HepG2 (cell line): ENCODE measurements at regions of chr14 and their contacts with region 1.

Region 1: DNA sequence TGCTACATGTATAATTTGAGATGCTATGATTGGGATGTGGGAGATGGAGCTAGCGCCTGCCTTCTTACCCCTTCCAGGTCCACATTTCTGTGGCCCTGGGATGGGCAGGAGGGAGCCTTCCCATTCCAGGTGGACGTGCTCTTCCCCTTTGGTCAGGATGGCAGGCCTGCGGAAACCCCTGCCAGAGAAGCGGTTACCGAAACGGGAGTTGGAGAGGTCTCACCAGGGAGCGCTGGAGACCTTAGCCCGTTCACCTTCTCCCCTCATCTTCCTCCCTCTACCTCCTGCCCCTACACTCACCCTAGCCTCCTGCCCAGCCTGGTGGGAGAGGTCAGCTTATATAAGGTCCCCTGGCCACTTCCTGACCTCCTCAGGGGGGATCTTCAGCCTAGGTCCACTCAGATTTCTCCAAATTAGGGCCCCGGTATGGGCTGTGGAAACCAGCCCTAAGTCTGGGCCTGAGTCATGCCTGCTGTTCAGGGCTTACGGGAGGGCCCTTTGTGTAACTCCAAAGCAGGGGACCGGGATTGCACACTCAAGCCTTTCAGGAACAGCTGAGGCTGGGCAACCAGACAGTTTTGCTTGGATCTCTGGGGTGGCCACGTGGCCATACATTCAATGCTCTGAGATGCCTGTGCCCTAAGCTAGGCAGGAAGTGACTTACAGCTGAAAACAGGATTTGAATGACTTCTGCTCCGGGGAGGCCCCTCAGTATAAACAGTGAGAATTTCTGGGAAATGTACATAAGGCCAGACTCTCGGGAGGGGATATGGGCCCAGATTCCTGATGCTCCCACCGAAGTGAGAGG is 10.2 kb upstream of the MEG3 start:
- DNase-seq: peak; percentile 91
- ATAC-seq: peak; percentile 45
- H3K4me3 ChIP-seq: peak overlapping the region in 1 of 3 experiments; percentile 7; a peak in 1 of 6 replicates
- H3K27ac ChIP-seq: peak overlapping the region; percentile 100
- H3K4me1 ChIP-seq: peaks cover 69% of the 10 kb centered on the region
- H3K27me3 ChIP-seq: no peaks in the 10 kb centered on the region
- CTCF ChIP-seq: 0 out of 2 replicates have a peak, but pooled peaks have one; percentile 19
- EP300 ChIP-seq: peak in 1 of 2 experiments; percentile 89; a peak in 2 of 4 replicates
- POLR2A ChIP-seq: no peak; a peak in 1 of 4 replicates
- RAD21 ChIP-seq: no peak

Region 2: DNA sequence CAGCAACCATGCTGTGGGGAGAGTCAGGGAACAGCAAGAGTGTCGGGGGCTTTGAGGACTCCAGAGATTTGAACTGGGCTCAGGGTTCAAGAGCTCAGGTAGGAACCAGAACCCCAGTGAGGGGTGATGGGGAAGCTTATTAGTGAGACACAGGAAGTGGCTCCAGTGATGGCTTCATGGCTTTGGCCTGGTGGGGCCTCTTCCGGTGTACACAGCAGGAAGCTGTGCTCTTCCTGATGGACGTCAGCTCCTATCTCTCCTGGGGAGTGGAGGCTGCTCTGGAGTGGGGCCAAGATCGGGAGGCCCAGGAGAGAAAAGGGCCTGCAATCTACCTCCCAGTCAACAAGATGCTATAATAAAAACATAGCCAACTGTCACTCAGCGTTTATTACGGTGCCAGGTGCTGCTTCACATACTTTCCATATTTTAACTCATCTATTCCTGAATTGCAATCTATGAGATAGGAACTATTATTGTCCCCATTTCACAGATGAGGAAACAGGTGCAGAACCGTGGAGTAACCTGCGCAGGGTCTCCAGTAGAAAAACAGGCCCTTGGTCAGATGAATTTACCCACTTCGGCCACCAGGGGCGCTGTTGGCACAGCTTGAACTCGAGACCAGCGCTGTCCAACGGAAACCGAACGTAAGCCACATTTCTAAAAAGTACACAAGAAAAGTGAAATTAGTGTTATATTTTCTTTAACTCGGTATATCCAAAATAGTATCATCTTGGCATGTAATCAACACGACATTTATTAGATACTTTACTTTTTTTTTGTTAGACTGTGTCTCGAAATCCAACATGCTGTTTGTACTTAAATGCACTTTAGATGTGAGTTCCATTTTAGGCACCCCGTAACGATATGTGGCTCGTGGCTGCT is 152.6 kb before region 1 on chr14:
- CTCF ChIA-PET with region 1: no interaction called
- POLR2A ChIA-PET with region 1: interaction called, 27 read pairs
- in situ Hi-C with region 1: loop called (anchors 10 kb)
- intact Hi-C with region 1: loop called (anchors 10 kb)
- DNase-seq: peak; percentile 77
- ATAC-seq: peak; percentile 23; the same call in 1 of the 3 replicates
- H3K4me3 ChIP-seq: peak overlapping the region in 2 of 3 experiments; percentile 1 to 19; a peak in 2 of 6 replicates
- H3K27ac ChIP-seq: no peak overlapping the region
- H3K4me1 ChIP-seq: peaks cover 89% of the 10 kb centered on the region
- H3K27me3 ChIP-seq: no peaks in the 10 kb centered on the region
- CTCF ChIP-seq: peak; percentile 80
- EP300 ChIP-seq: no peak
- POLR2A ChIP-seq: no peak
- RAD21 ChIP-seq: peak; percentile 56

Region 3: DNA sequence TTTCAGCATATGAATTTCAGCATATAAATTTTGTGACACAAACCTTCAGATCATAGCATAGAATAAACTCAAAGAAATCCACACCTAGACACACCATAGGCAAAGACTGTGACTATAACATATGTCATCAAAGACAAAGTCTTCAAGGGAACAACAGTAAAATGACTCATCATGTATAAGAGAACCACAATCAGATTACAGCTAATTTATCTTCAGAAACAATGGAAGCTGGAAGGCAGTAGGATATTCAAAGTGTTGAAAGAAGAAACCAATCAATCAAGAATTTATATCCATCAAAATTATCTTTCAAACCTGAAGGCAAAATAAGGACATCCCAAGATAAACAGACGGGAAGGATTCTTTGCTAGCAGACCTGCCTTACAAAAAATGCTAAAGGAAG is 60.0 kb before region 1 on chr14:
- CTCF ChIA-PET with region 1: no interaction called
- POLR2A ChIA-PET with region 1: interaction called, 102 read pairs
- in situ Hi-C with region 1: no loop called
- intact Hi-C with region 1: loop called (anchors 1 kb)
- DNase-seq: no peak
- ATAC-seq: no peak
- H3K4me3 ChIP-seq: no peak overlapping the region
- H3K27ac ChIP-seq: no peak overlapping the region
- H3K4me1 ChIP-seq: peaks cover 59% of the 10 kb centered on the region
- H3K27me3 ChIP-seq: no peaks in the 10 kb centered on the region
- CTCF ChIP-seq: no peak
- EP300 ChIP-seq: no peak
- POLR2A ChIP-seq: no peak
- RAD21 ChIP-seq: no peak

Region 4: GRCh38 chr14:100770889-100771800 is 44.5 kb before region 1 on chr14:
- CTCF ChIA-PET with region 1: no interaction called
- POLR2A ChIA-PET with region 1: interaction called, 34 read pairs
- in situ Hi-C with region 1: no loop called
- intact Hi-C with region 1: no loop called
- DNase-seq: peak; percentile 43
- ATAC-seq: peak; percentile 28; the same call in 2 of the 3 replicates
- H3K4me3 ChIP-seq: no peak overlapping the region
- H3K27ac ChIP-seq: peak overlapping the region; percentile 36
- H3K4me1 ChIP-seq: peaks cover 41% of the 10 kb centered on the region
- H3K27me3 ChIP-seq: no peaks in the 10 kb centered on the region
- CTCF ChIP-seq: no peak
- EP300 ChIP-seq: peak in 1 of 2 experiments; percentile 82; a peak in 2 of 4 replicates
- POLR2A ChIP-seq: no peak
- RAD21 ChIP-seq: no peak

Region 5: GRCh38 chr14:100803226-100803625 is 12.5 kb before region 1 on chr14:
- CTCF ChIA-PET with region 1: no interaction called
- POLR2A ChIA-PET with region 1: interaction called, 33 read pairs
- in situ Hi-C with region 1: no loop called
- intact Hi-C with region 1: no loop called
- DNase-seq: no peak
- ATAC-seq: no peak
- H3K4me3 ChIP-seq: no peak overlapping the region
- H3K27ac ChIP-seq: no peak overlapping the region
- H3K4me1 ChIP-seq: peaks cover 6% of the 10 kb centered on the region; the same call in 1 of the 2 replicates
- H3K27me3 ChIP-seq: no peaks in the 10 kb centered on the region
- CTCF ChIP-seq: no peak
- EP300 ChIP-seq: no peak
- POLR2A ChIP-seq: no peak
- RAD21 ChIP-seq: no peak

Region 6: DNA sequence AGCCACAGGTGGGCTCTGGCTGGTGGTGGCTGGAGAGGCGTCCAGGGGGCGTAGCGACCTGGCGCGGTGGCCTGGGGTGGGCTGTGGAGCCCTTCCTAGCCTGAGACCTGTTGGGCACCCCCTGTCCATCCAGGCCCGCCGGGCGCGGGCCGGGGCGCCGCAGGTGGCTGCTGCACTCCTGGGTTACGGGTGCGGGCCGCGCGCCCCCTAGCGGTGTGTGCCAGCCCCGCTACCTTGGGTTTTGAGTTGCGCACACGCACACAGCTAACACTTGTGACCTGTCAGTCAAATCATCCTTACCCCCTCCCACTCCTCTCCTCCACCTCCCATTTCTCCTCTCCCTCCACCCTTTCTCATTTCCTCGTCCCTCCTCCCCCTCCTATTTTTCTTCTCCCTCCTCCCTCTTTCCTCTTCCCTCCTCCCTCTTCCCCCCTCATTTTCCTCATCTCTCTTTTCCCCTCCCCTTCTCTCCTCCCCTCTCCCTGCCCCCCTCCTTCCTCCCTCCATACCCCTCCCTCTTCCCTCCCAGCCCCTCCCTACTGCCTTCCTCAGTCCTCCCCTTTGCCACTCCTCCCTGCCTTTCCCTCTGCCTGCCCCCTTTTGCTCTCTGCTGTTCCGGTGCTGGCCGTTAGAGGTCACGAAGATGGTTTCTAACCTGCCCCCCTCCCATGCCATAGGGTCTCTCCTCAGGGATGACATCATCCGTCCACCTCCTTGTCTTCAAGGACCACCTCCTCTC is 12.5 kb after region 1 on chr14:
- CTCF ChIA-PET with region 1: no interaction called
- POLR2A ChIA-PET with region 1: no interaction called
- in situ Hi-C with region 1: no loop called
- intact Hi-C with region 1: no loop called
- DNase-seq: no peak
- ATAC-seq: no peak
- H3K4me3 ChIP-seq: no peak overlapping the region
- H3K27ac ChIP-seq: no peak overlapping the region
- H3K4me1 ChIP-seq: peaks cover 45% of the 10 kb centered on the region
- H3K27me3 ChIP-seq: no peaks in the 10 kb centered on the region
- CTCF ChIP-seq: no peak
- EP300 ChIP-seq: no peak
- POLR2A ChIP-seq: no peak
- RAD21 ChIP-seq: no peak

Region 7: GRCh38 chr14:101288436-101289229 is 473.0 kb after region 1 on chr14:
- CTCF ChIA-PET with region 1: no interaction called
- POLR2A ChIA-PET with region 1: interaction called, 17 read pairs
- in situ Hi-C with region 1: no loop called
- intact Hi-C with region 1: no loop called
- DNase-seq: peak; percentile 99
- ATAC-seq: peak; percentile 92
- H3K4me3 ChIP-seq: peak overlapping the region; percentile 48 to 71 (median 55)
- H3K27ac ChIP-seq: peak overlapping the region; percentile 99
- H3K4me1 ChIP-seq: peaks cover 78% of the 10 kb centered on the region
- H3K27me3 ChIP-seq: no peaks in the 10 kb centered on the region
- CTCF ChIP-seq: peak; percentile 47
- EP300 ChIP-seq: peak; percentile 96 to 99
- POLR2A ChIP-seq: peak; percentile 71 to 85
- RAD21 ChIP-seq: peak; percentile 71